ENCODE measurements at regions of chr2 and their contacts with region 1.

Region 1: DNA sequence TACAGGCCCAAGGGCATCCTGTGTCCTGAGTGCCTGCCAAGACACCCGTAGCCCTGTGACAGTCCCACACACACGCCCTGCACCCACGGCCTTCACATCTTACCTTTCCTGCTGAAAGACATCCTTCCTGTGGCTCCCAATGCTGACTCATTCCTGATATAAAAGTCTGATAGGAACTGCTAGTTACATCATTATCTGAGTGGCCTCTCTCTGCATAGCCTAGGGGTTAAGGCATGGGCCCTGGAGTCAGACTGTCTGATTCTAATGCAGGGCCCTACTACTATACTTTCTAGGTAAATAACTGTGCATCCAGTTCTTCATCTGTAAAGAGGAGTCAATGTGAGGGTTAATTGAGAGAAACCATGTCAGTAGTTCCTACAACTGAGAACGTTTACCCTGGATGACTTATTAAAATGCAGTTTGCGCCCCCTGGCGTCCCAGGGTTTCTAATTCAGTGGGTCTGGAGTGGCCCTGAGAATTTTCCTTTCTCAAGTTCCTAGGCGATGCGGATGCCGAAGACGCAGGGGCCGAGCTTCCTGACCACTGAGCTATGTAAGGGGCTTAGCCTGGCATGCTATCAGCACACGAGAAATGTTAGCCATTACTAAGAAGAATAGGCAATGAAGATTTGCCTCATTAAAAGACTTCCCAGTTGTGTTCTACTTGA is 6.0 kb upstream of the GPR45 start:
- H3K4me3 ChIP-seq: no peak overlapping the region
- H3K27ac ChIP-seq: no peak overlapping the region
- H3K4me1 ChIP-seq: no peaks in the 10 kb centered on the region
- CTCF ChIP-seq: 0 out of 2 replicates have a peak, but pooled peaks have one; percentile 36

Region 2: GRCh38 chr2:105114551-105114950 is 121.0 kb before region 1 on chr2:
- CTCF ChIA-PET with region 1: interaction called, 343 read pairs
- POLR2A ChIA-PET with region 1: no interaction called
- H3K4me3 ChIP-seq: no peak overlapping the region
- H3K27ac ChIP-seq: no peak overlapping the region
- H3K4me1 ChIP-seq: no peaks in the 10 kb centered on the region
- CTCF ChIP-seq: 0 out of 2 replicates have a peak, but pooled peaks have one; percentile 34

Region 3: DNA sequence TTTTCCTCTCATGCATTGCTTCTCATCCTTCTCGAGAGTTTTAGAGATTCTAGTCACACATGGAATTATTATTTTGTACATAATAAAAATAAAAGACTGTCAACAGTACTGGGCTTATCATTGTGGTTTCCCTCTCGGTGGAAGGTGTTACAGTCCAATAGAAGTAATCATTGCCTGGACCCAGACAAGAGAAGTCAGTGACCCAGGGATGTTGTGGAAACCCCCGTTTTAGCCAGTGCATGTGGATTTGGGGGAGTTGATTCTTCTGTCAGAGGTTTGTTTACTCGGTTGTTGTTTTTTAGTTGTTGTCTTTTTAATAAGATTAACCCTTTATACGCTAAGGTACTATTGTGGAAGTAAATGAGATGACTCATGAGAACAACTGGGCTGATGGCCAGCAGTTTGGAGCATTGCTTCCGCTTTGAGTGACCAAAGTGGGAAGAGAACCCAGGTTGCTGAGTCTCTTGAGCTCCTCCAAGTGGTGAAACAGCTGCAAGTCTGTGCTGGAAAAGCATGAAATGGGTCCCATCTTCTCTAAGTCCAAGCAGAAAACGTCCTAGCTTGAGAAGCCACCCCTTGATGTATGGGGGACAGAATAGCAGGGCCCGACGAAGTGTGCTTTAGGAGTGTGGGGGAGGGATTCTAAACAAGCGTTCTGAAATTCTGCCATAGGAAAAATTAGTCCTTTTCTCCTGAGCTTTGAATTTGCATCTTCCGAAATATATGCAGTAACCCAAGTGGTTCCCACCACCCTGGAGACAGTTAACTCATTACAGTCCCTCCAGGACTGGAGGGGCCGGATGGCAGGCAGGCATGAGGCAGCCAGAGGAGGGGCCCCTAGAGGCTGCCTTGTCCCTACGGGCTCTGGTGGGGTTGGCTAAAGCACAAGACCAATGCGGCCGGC is 55.8 kb before region 1 on chr2:
- CTCF ChIA-PET with region 1: interaction called, 12 read pairs
- POLR2A ChIA-PET with region 1: no interaction called
- H3K4me3 ChIP-seq: no peak overlapping the region
- H3K27ac ChIP-seq: no peak overlapping the region
- H3K4me1 ChIP-seq: no peaks in the 10 kb centered on the region
- CTCF ChIP-seq: peak; percentile 69

Region 4: DNA sequence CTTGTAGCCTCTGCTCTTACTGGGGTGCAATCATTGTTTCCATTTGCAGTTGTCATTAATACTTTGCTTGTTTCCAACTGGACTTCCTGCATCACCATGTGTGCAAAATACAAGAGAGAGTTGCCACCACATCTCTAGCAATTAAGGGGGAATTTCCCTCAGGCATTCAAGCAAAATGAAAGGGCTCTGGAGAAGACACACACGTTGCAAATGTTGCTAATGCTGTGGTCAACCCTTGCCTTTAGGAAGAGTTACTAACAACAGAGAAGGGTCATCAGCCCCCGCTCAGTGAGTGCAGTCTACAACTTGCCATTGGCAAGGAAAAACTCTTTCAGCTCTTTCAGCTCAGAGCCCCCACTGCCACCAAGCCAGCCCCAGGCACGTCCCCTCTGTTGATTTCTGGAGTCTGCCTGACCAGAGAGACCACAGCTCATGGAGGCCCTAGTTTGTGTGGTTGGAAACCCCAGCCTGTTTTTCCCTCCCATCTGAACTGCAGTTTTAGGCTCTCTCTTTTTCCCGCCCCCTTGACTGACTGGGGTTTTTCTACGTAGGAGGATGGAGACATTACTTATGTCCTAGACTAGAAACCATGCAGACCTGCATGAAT is 19.8 kb before region 1 on chr2:
- CTCF ChIA-PET with region 1: interaction called, 10 read pairs
- POLR2A ChIA-PET with region 1: no interaction called
- H3K4me3 ChIP-seq: no peak overlapping the region
- H3K27ac ChIP-seq: no peak overlapping the region
- H3K4me1 ChIP-seq: no peaks in the 10 kb centered on the region
- CTCF ChIP-seq: no peak

Region 5: DNA sequence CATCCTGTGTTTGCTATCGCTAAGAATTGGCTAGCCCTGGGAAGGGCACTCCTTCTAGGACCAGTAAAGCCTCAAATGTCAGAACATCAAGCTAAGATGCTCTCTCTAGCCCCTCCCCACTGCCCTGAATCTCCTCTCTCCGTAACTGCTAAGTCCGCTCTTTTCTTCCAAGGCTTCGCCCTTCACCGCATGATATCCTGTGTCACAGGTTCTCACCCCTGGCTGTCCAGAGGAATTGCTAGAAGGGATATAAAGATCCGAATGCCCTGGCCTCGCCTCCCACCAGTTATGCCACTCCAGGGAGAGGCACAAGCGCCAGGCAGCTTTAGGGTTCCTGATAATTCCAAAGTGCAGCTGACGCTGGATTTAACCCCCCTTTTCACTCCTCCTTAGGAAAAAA is 11.1 kb before region 1 on chr2:
- CTCF ChIA-PET with region 1: interaction called, 11 read pairs
- POLR2A ChIA-PET with region 1: no interaction called
- H3K4me3 ChIP-seq: no peak overlapping the region
- H3K27ac ChIP-seq: no peak overlapping the region
- H3K4me1 ChIP-seq: no peaks in the 10 kb centered on the region
- CTCF ChIP-seq: no peak

Region 6: DNA sequence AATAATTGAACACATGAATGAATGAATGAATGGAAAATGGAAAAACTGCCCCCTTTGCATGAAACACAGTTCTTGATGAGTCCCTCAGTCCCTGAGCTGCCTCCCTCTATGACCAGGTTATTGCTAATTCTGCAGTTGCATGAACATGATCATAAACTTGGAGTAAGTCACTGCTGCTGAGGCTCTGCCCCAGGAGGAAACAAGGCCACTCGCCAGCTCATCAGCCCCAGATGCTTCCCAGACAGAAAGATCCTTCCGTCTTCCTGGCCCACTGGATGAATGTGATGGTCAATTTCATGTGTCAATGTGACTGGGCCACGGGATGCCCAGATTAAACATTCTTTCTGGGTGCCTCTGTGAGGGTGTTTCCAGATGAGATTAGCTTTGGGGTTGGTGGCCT is 22.5 kb after region 1 on chr2:
- CTCF ChIA-PET with region 1: interaction called, 11 read pairs
- POLR2A ChIA-PET with region 1: interaction called, 5 read pairs
- H3K4me3 ChIP-seq: no peak overlapping the region
- H3K27ac ChIP-seq: no peak overlapping the region
- H3K4me1 ChIP-seq: no peaks in the 10 kb centered on the region
- CTCF ChIP-seq: no peak

Region 7: DNA sequence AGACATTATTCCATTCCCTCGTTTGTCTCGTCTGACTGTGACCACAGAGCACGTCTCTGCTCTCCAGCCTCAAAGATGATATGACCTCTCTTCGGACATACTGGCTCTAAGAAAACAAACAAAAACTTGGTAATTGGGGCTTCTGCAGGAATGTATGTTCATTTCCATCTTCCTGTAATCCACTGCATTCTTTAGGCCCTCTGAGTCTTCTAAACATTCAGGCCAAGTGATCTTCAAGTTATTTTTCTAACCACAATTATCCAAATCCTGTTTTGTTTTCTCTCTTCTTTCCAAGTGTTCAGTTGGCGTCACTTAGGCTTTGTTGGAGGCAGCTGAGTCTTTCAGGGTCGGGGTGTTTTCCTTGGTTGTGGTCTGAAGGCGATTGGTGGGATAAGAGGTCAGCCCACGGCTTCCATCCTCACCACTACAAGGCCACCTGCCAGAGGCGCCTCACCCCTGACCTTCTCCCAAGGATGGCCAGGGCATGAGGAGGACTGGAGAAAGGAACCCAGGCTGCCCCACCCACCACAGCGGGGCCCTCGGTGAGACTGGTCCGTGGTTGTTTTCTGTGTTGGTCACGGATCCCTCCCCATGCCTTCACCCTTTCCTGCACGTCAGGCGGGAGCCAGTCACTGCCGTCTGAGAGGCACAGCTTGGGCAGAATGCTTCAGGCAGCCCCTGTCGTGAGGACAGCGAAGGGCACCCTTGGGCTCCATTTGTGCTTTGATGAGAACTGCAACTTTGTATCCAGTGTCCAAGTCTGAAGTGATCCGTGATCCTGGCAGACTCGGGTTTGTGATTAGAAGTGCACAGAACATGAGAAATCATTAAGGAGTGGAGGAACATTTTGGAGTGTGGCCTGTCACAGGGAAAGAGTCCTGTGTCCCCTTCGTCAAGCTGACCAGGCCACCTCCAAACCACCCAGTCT is 251.9 kb after region 1 on chr2:
- CTCF ChIA-PET with region 1: no interaction called
- POLR2A ChIA-PET with region 1: no interaction called
- H3K4me3 ChIP-seq: no peak overlapping the region
- H3K27ac ChIP-seq: no peak overlapping the region
- H3K4me1 ChIP-seq: no peaks in the 10 kb centered on the region
- CTCF ChIP-seq: no peak

Measured in HEK293 (cell line).